Cardiac septum (tissue), 1 donor: ENCODE measurements at regions of chr5 and their contacts with region 1.

Region 1: DNA sequence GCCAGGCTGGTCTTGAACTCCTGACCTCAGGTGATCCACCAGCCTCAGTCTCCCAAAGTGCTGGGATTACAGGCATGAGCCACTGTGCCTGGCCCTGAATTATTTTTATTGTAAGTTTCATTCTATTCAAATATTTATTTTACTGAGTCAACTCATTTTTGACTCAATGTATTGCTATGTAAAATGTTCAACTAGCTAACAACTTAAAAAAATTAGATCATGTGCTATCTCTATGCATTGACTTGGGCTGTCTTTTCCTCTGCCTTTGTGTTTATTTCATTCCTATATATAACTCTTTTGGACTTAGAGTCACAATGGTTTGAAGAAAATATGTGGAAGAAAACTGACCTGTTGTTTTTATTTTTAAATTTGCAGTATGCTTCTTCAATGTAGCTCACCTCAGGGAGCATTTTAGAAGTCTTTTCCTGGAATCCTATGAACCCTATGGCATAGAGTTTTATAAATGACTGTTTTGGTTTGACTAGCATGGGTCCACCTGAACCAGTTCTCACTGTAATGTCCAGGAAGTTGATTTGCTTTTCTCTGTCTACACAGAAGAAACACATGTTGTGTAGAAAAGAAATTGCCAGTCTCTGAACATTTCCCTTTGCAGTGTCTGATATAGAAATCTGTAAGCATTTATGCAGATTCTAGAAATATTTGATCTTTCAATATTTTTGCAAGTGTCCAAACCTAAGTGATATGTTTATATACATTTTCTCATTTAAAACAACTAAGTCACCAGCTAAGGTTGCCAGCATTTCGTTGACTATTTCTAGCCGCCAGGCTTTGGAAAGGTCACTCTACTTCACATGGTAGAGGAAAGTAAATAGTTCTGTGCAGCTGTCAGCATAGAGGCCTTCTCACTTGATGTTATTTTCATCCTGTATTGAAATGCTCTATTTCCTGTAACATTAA is 138.8 kb downstream of the PCSK1 start:
- DNase-seq: no peak

Region 2: GRCh38 chr5:96247097-96247701 is 47.0 kb before region 1 on chr5:
- intact Hi-C with region 1: loop called (anchors 5 kb)
- DNase-seq: no peak